Spleen (tissue), 13 donors: ENCODE measurements at regions of chr11 and their contacts with region 1.

Region 1: GRCh38 chr11:47800759-47801158 is 33.6 kb upstream of the FNBP4 start:
- DNase-seq: no peak
- H3K4me3 ChIP-seq: no peak overlapping the region
- H3K27ac ChIP-seq: no peak overlapping the region
- H3K4me1 ChIP-seq: no peaks in the 10 kb centered on the region
- H3K27me3 ChIP-seq: no peaks in the 10 kb centered on the region
- CTCF ChIP-seq: no peak
- POLR2A ChIP-seq: no peak

Region 2: GRCh38 chr11:47731475-47731874 is 69.3 kb before region 1 on chr11:
- intact Hi-C with region 1: loop called (anchors 10 kb)
- DNase-seq: no peak
- H3K4me3 ChIP-seq: no peak overlapping the region
- H3K27ac ChIP-seq: no peak overlapping the region
- H3K4me1 ChIP-seq: no peaks in the 10 kb centered on the region
- H3K27me3 ChIP-seq: no peaks in the 10 kb centered on the region
- CTCF ChIP-seq: no peak
- POLR2A ChIP-seq: no peak